ENCODE measurements at regions of chr3 and their contacts with region 1.

Region 1: DNA sequence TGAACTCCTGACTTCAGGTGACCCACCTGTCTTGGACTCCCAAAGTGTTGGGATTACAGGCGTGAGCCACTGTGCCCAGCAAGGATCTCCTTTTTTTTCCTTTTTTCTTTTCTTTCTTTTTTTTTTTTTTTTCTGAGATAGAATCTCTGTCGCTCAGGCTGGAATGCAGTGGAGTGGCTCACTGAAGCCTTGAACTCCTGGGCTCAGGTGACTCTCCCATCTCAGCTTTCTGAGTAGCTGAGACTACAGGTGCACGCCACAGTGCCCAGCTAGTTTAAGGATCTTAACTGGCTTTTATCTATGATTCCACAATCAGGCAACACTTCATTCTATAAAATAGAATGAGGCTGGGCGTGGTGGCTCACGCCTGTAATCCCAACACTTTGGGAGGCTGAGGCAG is 16.3 kb upstream of the NICN1 start:
- DNase-seq: no peak

Region 2: GRCh38 chr3:48408823-48409281 is 1036.5 kb before region 1 on chr3:
- intact Hi-C with region 1: no loop called
- DNase-seq: peak; percentile 58

Region 3: DNA sequence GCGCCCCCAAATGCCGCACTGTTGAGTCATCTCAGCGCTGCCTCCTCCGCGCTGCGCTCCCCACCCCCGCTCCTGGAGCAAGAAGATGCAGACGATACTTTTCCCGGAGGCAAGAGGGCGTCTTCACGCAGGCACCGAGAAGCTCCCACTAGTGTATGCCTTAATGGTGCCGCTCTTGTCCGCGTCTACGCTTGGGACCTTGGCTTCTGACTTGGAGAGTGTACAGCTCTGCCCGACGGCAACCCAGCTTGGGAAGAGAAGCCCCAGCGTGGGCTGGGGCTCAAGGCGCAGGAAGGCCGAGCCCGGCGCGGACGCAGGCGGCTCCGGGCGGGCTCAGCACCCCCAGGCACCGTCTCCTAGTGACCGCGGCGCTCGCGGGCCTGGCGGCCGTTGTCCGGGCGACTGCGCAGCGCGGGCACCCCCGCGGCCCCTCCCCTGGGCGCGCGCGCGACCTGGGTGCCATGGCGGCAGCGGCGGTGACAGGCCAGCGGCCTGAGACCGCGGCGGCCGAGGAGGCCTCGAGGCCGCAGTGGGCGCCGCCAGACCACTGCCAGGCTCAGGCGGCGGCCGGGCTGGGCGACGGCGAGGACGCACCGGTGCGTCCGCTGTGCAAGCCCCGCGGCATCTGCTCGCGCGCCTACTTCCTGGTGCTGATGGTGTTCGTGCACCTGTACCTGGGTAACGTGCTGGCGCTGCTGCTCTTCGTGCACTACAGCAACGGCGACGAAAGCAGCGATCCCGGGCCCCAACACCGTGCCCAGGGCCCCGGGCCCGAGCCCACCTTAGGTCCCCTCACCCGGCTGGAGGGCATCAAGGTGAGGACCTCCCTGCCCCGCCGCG is 455.4 kb before region 1 on chr3 and contains the start of gene P4HTM:
- intact Hi-C with region 1: loop called (anchors 10 kb)
- DNase-seq: peak; percentile 91
- total RNA-seq, gene P4HTM: 37.0 TPM

Region 4: DNA sequence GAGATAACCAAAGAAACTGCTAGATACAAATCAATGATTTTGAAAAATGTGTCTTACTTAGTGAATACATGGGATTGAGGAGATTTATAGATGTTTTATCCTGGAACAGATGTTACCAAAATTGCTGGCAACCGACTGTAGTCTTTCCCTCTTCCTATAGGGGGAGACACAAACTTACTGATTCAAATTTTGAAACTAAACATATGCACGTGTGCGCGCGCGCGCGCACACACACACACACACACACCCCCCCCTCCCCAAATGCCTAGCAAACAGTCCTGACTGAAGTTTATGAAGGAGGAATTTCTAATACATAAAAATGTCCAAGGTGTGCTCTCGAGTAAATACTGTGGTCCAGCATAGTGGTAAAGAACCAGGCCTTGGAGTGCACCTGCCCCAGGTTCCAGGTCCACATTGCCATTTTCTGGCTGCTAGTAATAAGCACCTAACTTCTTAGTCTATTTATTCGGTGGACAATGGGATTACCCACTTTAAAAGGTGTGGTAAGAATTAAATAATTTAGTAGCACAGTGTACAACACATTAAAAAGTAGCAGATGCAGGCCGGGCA is 149.8 kb before region 1 on chr3:
- intact Hi-C with region 1: loop called (anchors 5 kb)
- DNase-seq: no peak

Region 5: DNA sequence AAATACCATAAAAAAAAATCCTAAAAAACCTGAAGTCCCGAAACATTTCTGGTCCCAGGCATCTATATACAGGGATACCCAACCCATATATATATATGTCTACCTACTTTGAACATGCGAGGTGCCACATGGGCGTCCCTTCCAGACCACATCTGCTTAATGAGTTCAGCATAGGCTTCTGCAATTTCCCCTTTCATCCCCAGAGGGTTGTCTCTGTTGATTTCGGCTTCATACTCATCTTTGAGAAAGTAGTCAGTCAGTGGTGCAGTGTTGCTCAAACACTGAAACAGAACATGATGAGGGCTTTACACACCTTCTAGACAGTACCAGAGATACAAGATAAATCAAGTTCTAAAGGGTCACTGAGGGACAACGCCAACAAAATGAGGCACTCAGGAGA is 139.8 kb before region 1 on chr3:
- intact Hi-C with region 1: no loop called
- DNase-seq: no peak

Region 6: GRCh38 chr3:49358217-49358883 is 87.0 kb before region 1 on chr3 and contains the start of gene GPX1:
- intact Hi-C with region 1: loop called (anchors 5 kb)
- DNase-seq: peak; percentile 97
- total RNA-seq, gene GPX1: 106 TPM

Region 7: GRCh38 chr3:49461443-49462171 is 16.2 kb after region 1 on chr3:
- intact Hi-C with region 1: no loop called
- DNase-seq: no peak